ENCODE measurements at regions of chr4 and their contacts with region 1.

Region 1: DNA sequence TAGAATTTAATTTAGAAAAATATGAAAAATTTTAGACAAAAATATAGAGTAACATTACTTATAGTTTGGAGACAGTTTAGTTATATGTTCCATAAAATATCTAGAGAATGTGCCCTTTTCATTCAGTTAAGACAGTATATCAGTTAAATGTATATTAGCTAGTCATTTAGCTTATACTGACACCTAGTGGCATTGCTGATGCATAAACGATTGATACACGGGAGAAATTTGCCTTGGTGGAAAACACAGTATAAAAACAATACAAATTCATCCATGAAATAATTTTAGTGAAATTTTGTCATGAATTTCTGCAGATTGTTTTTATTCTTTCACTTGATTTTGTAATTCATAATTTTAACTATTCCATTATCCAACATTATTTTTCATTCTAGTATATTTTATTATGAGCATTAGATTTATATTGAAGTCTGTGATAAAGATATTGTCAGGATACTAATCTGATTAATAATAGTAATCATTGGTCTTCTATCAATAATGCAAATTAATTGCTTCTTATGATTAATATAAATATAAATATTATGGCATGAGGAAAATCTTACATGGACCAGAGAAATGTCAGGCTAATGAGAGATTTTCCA is 219.0 kb downstream of the TLL1 start:
- DNase-seq: no peak
- ATAC-seq: peak; percentile 64 to 82 (median 80)
- H3K4me3 ChIP-seq: no peak overlapping the region
- H3K27ac ChIP-seq: no peak overlapping the region
- H3K4me1 ChIP-seq: no peaks in the 10 kb centered on the region
- H3K27me3 ChIP-seq: no peaks in the 10 kb centered on the region
- CTCF ChIP-seq: peak in 3 of 4 donors; percentile 33 to 65 (median 53)

Region 2: GRCh38 chr4:165537028-165537648 is 554.9 kb before region 1 on chr4:
- intact Hi-C with region 1: loop called (anchors 5 to 10 kb)
- DNase-seq: peak in 1 of 6 donors; percentile 11
- ATAC-seq: peak; percentile 55 to 85 (median 81)
- H3K4me3 ChIP-seq: no peak overlapping the region
- H3K27ac ChIP-seq: no peak overlapping the region
- H3K4me1 ChIP-seq: no peaks in the 10 kb centered on the region
- H3K27me3 ChIP-seq: no peaks in the 10 kb centered on the region
- CTCF ChIP-seq: peak; percentile 52 to 74 (median 59)

Region 3: GRCh38 chr4:166012129-166013078 is 79.6 kb before region 1 on chr4:
- intact Hi-C with region 1: no loop called
- DNase-seq: no peak
- ATAC-seq: no peak
- H3K4me3 ChIP-seq: no peak overlapping the region
- H3K27ac ChIP-seq: no peak overlapping the region
- H3K4me1 ChIP-seq: no peaks in the 10 kb centered on the region
- H3K27me3 ChIP-seq: no peaks in the 10 kb centered on the region
- CTCF ChIP-seq: no peak

Measured in pancreas (tissue), 10 donors.